ENCODE measurements at regions of chrX and their contacts with region 1.

Region 1: GRCh38 chrX:23782863-23783568 is at the start of gene SAT1:
- DNase-seq: peak; percentile 84 to 96 (median 91)
- ATAC-seq: peak; percentile 88
- H3K4me3 ChIP-seq: peak within 1 kb of the TSS; percentile 91
- H3K4me3 Mint-ChIP-seq: peak within 1 kb of the TSS; percentile 98
- H3K27ac ChIP-seq: peak within 1 kb of the TSS; percentile 74 to 90
- H3K27ac Mint-ChIP-seq: peak within 1 kb of the TSS; percentile 97
- H3K4me1 ChIP-seq: peaks cover 19% of the 10 kb centered on the region
- H3K4me1 Mint-ChIP-seq: peaks cover 44% of the 10 kb centered on the region
- H3K27me3 ChIP-seq: no peaks in the 10 kb centered on the region
- H3K27me3 Mint-ChIP-seq: no peaks in the 10 kb centered on the region
- CTCF ChIP-seq: peak; percentile 65
- total RNA-seq, gene SAT1: 305 to 312 TPM

Region 2: DNA sequence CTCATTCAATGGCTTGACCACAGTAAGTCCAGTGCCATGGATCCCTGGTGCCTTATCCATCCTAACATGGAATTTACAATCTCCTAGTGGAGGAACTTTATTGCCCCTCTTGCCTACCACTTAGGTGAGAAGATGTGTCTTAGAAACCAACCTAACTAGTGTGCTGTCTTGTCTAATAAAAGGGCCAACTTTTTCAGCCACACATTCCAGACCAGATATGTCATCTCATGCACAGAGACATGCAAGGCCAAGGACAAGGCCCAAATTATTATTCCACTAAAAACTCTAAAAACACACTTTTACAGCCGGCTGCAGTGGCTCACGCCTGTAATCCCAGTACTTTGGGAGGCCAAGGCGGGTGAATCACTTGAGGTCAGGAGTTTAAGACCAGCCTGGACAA is 126.3 kb before region 1 on chrX:
- CTCF ChIA-PET with region 1: no interaction called
- POLR2A ChIA-PET with region 1: no interaction called
- intact Hi-C with region 1: no loop called
- DNase-seq: no peak
- ATAC-seq: no peak
- H3K4me3 ChIP-seq: no peak overlapping the region
- H3K4me3 Mint-ChIP-seq: no peak overlapping the region
- H3K27ac ChIP-seq: no peak overlapping the region
- H3K27ac Mint-ChIP-seq: no peak overlapping the region
- H3K4me1 ChIP-seq: no peaks in the 10 kb centered on the region
- H3K4me1 Mint-ChIP-seq: peaks cover 6% of the 10 kb centered on the region
- H3K27me3 ChIP-seq: no peaks in the 10 kb centered on the region
- H3K27me3 Mint-ChIP-seq: no peaks in the 10 kb centered on the region
- CTCF ChIP-seq: no peak

Region 3: GRCh38 chrX:23742697-23743622 is 40.1 kb before region 1 on chrX and contains the start of gene ACOT9:
- CTCF ChIA-PET with region 1: interaction called, 3 read pairs
- POLR2A ChIA-PET with region 1: interaction called, 50 read pairs
- intact Hi-C with region 1: loop called (anchors 5 kb)
- DNase-seq: peak; percentile 29 to 84 (median 48)
- ATAC-seq: peak; percentile 80
- H3K4me3 ChIP-seq: peak within 1 kb of the TSS; percentile 79
- H3K4me3 Mint-ChIP-seq: peak within 1 kb of the TSS; percentile 93
- H3K27ac ChIP-seq: peak within 1 kb of the TSS in 1 of 2 donors; percentile 58
- H3K27ac Mint-ChIP-seq: peak within 1 kb of the TSS; percentile 87
- H3K4me1 ChIP-seq: peaks cover 28% of the 10 kb centered on the region
- H3K4me1 Mint-ChIP-seq: peaks cover 29% of the 10 kb centered on the region
- H3K27me3 ChIP-seq: no peaks in the 10 kb centered on the region
- H3K27me3 Mint-ChIP-seq: no peaks in the 10 kb centered on the region
- CTCF ChIP-seq: no peak
- total RNA-seq, gene ACOT9: 14.8 to 16.2 TPM

Region 4: DNA sequence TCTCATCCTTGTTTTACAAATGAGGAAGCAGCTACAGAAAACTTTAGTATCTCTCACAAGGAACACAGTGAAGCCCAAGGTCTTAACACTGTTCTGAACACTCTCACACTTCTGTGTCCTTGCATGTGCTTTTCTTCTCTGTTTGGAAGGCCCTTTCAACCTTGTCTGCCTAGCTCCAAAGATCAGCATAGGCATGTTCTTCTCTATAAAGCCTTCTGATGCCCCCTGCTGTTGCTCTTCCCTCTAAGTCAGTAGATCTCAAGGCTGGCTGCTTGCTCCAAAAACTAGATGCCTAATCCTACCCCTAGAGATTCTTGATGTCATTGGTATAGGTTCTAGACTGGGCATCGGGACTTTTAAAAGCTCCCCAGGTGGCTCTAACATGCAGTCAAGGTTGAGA is 118.8 kb after region 1 on chrX:
- CTCF ChIA-PET with region 1: interaction called, 7 read pairs
- POLR2A ChIA-PET with region 1: interaction called, 21 read pairs
- intact Hi-C with region 1: loop called (anchors 2 to 5 kb)
- DNase-seq: peak in 9 of 14 experiments; percentile 4 to 75 (median 30)
- ATAC-seq: peak; percentile 80
- H3K4me3 ChIP-seq: no peak overlapping the region
- H3K4me3 Mint-ChIP-seq: no peak overlapping the region
- H3K27ac ChIP-seq: no peak overlapping the region
- H3K27ac Mint-ChIP-seq: no peak overlapping the region
- H3K4me1 ChIP-seq: no peaks in the 10 kb centered on the region
- H3K4me1 Mint-ChIP-seq: peaks cover 4% of the 10 kb centered on the region
- H3K27me3 ChIP-seq: no peaks in the 10 kb centered on the region
- H3K27me3 Mint-ChIP-seq: no peaks in the 10 kb centered on the region
- CTCF ChIP-seq: no peak

Region 5: DNA sequence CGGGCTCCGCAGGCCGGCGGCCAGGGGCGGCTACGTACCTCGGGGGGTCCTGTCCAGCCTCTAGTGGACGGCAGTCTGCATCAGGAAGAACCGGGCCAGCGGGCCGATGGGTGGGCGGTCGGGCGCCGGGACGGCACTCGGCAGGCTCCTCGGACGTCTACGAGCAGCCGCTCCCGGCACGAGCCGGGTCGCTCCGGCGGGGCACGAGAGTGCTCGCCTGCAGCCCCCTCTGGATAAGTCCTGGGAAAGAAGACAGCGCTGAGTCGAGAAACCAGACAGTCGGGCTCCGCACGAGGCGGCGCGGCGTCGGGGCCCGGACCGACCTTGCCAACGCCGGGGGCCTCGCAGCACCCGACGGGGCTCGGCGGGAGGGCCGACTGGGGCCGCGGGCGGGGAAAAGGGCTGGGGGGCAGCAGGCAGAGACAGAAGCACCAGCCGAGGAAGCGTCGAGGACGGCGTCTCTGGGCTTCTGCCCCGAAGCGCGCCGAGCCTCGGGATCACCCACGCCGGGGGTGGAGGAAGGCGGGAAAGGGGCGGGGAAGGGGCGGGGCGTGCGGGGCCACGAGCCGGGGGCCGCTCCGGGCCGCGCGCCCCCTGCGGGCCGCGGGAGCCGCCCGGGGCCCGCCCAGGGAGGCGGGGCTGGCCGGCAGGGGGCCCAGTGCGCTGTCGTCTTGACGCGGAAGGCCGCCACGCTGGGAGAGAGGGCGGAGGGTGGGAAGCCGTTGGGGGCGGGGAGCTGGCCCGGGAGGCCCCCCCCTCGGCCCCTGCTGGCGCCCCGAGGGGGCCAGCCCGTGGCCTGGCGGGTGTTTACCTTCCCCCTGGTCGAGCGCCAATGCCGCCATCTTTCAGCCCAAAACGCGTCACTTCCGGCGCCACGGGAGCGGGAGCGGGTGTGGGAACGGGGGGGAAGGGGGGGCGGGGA is 242.1 kb after region 1 on chrX:
- CTCF ChIA-PET with region 1: interaction called, 3 read pairs
- POLR2A ChIA-PET with region 1: interaction called, 14 read pairs
- intact Hi-C with region 1: loop called in 1 of 2 experiments (anchors 10 kb)
- DNase-seq: peak; percentile 63 to 90 (median 76)
- ATAC-seq: peak; percentile 85
- H3K4me3 ChIP-seq: peak overlapping the region; percentile 76
- H3K4me3 Mint-ChIP-seq: peak overlapping the region; percentile 94
- H3K27ac ChIP-seq: peak overlapping the region in 1 of 2 donors; percentile 74
- H3K27ac Mint-ChIP-seq: peak overlapping the region; percentile 94
- H3K4me1 ChIP-seq: peaks cover 7% of the 10 kb centered on the region
- H3K4me1 Mint-ChIP-seq: peaks cover 30% of the 10 kb centered on the region
- H3K27me3 ChIP-seq: no peaks in the 10 kb centered on the region
- H3K27me3 Mint-ChIP-seq: no peaks in the 10 kb centered on the region
- CTCF ChIP-seq: no peak

Region 6: DNA sequence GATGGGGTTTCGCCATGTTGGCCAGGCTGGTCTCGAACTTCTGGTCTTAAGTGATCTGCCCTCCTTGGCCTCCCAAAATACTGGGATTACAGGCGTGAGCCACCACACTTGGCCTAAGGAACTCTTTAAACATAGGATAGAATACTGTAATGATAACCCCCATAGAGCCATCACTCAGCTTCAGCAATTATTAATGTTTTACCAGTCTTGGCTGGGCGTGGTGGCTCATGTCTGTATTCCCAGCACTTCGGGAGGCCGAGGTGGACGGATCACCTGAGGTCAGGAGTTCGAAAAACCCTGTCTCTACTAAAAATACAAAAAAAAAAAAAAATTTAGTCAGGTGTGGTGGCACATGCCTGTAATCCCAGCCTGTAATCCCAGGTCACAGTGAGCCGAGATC is 286.9 kb after region 1 on chrX:
- CTCF ChIA-PET with region 1: no interaction called
- POLR2A ChIA-PET with region 1: no interaction called
- intact Hi-C with region 1: no loop called
- DNase-seq: no peak
- ATAC-seq: no peak
- H3K4me3 ChIP-seq: no peak overlapping the region
- H3K4me3 Mint-ChIP-seq: no peak overlapping the region
- H3K27ac ChIP-seq: no peak overlapping the region
- H3K27ac Mint-ChIP-seq: no peak overlapping the region
- H3K4me1 ChIP-seq: no peaks in the 10 kb centered on the region
- H3K4me1 Mint-ChIP-seq: no peaks in the 10 kb centered on the region
- H3K27me3 ChIP-seq: no peaks in the 10 kb centered on the region
- H3K27me3 Mint-ChIP-seq: no peaks in the 10 kb centered on the region
- CTCF ChIP-seq: no peak

Region 7: GRCh38 chrX:24204331-24204730 is 421.3 kb after region 1 on chrX:
- CTCF ChIA-PET with region 1: no interaction called
- POLR2A ChIA-PET with region 1: no interaction called
- intact Hi-C with region 1: no loop called
- DNase-seq: no peak
- ATAC-seq: no peak
- H3K4me3 ChIP-seq: no peak overlapping the region
- H3K4me3 Mint-ChIP-seq: no peak overlapping the region
- H3K27ac ChIP-seq: no peak overlapping the region
- H3K27ac Mint-ChIP-seq: peak overlapping the region; percentile 65
- H3K4me1 ChIP-seq: peaks cover 8% of the 10 kb centered on the region
- H3K4me1 Mint-ChIP-seq: peaks cover 47% of the 10 kb centered on the region
- H3K27me3 ChIP-seq: no peaks in the 10 kb centered on the region
- H3K27me3 Mint-ChIP-seq: no peaks in the 10 kb centered on the region
- CTCF ChIP-seq: no peak

Region 8: GRCh38 chrX:24479924-24480323 is 696.9 kb after region 1 on chrX:
- CTCF ChIA-PET with region 1: no interaction called
- POLR2A ChIA-PET with region 1: no interaction called
- intact Hi-C with region 1: loop called (anchors 10 kb)
- DNase-seq: peak; percentile 46 to 94 (median 63)
- ATAC-seq: peak; percentile 96
- H3K4me3 ChIP-seq: peak overlapping the region; percentile 39
- H3K4me3 Mint-ChIP-seq: peak overlapping the region; percentile 79
- H3K27ac ChIP-seq: peak overlapping the region; percentile 79 to 91
- H3K27ac Mint-ChIP-seq: peak overlapping the region; percentile 87
- H3K4me1 ChIP-seq: peaks cover 51% of the 10 kb centered on the region
- H3K4me1 Mint-ChIP-seq: peaks cover 86% of the 10 kb centered on the region
- H3K27me3 ChIP-seq: no peaks in the 10 kb centered on the region
- H3K27me3 Mint-ChIP-seq: no peaks in the 10 kb centered on the region
- CTCF ChIP-seq: no peak